Tibial artery (tissue), 4 donors: ENCODE measurements at regions of chr11 and their contacts with region 1.

Region 1: DNA sequence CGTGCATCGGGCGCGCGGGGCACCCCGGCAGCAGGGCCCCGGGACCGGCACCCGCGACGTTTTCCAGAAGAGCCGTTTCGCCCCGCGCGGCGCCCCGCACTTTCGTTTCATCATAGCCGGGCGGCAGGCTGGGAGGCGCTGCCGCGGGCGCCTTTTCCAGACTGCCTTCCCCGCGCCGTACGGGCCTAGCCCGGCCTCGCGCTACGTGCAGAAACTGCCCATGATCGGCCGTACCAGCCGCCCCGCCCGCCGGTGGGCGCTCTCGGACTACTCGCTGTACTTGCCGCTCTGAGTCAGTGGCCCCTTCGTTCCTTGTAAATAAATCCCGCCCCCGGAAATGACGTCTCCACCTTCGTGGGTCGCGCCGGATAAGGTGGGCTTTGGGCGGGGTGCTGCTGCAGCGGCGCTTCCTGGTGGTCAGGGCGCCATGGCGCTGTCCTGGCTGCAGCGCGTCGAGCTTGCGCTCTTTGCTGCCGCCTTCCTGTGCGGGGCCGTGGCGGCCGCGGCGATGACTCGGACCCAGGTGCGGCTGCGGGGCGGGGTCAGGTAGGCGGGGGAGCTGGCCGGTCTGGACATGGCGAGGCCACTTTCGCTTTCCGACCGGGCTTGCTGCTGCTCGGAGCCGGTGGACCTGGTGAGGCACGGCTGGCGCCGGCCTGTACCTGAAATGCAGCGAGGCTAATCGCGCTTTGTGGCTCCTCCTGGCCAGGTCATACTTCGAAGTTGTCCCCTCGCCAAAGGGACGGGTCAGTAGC is at the start of gene TMEM179B:
- DNase-seq: peak; percentile 99
- H3K4me3 ChIP-seq: peak within 1 kb of the TSS; percentile 88 to 89
- H3K27ac ChIP-seq: peak within 1 kb of the TSS; percentile 95
- H3K4me1 ChIP-seq: peaks cover 0 to 47% (median 38%) of the 10 kb centered on the region in 4 donors
- H3K27me3 ChIP-seq: no peaks in the 10 kb centered on the region
- CTCF ChIP-seq: peak; percentile 22 to 35

Region 2: GRCh38 chr11:62839050-62839945 is 52.1 kb after region 1 on chr11 and contains the start of gene WDR74:
- intact Hi-C with region 1: loop called (anchors 5 kb)
- DNase-seq: peak; percentile 91 to 93
- H3K4me3 ChIP-seq: peak within 1 kb of the TSS; percentile 66 to 84
- H3K27ac ChIP-seq: peak within 1 kb of the TSS; percentile 91 to 95
- H3K4me1 ChIP-seq: peaks cover 0 to 33% (median 15%) of the 10 kb centered on the region in 4 donors
- H3K27me3 ChIP-seq: no peaks in the 10 kb centered on the region
- CTCF ChIP-seq: no peak

Region 3: DNA sequence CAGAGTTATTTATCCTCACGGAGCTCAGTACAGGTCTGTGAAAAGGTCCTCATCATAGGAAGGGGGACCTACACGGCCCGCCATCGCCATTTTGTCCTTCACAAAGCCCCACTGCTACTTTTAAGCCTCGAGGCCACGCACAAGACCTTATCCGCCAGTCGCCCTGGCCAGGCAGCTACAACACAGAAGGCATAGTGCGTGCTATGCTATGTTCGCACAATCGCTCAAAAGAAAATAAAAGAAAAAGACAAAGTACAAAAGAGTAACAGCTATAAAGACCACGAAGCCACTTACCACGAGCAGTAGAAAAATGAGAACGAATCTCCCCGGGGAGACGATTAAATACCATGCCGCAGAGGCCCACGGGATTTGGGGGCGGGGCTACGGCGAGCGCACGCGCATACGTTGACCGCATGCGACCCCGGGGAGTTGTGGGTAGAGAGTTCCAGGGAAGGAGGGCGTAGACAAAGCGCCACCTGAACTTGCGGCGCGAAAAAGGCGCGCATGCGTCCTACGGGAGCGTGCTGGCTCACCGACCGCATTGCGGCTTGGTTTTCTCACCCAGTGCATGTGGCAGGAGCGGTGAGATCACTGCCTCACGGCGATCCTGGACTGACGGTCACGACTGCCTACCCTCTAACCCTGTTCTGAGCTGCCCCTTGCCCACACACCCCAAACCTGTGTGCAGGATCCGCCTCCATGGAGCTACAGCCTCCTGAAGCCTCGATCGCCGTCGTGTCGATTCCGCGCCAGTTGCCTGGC is 68.6 kb after region 1 on chr11:
- intact Hi-C with region 1: loop called (anchors 2 kb)
- DNase-seq: peak; percentile 93 to 98
- H3K4me3 ChIP-seq: peak overlapping the region; percentile 68 to 75
- H3K27ac ChIP-seq: peak overlapping the region; percentile 66 to 80
- H3K4me1 ChIP-seq: peaks cover 0 to 24% (median 22%) of the 10 kb centered on the region in 4 donors
- H3K27me3 ChIP-seq: no peaks in the 10 kb centered on the region
- CTCF ChIP-seq: peak in 1 of 2 experiments; percentile 25

Region 4: GRCh38 chr11:63179432-63180041 is 392.4 kb after region 1 on chr11:
- intact Hi-C with region 1: no loop called
- DNase-seq: no peak
- H3K4me3 ChIP-seq: no peak overlapping the region
- H3K27ac ChIP-seq: no peak overlapping the region
- H3K4me1 ChIP-seq: no peaks in the 10 kb centered on the region
- H3K27me3 ChIP-seq: no peaks in the 10 kb centered on the region
- CTCF ChIP-seq: no peak